OCI-LY7 (cell line): ENCODE measurements at regions of chr6 and their contacts with region 1.

Region 1: DNA sequence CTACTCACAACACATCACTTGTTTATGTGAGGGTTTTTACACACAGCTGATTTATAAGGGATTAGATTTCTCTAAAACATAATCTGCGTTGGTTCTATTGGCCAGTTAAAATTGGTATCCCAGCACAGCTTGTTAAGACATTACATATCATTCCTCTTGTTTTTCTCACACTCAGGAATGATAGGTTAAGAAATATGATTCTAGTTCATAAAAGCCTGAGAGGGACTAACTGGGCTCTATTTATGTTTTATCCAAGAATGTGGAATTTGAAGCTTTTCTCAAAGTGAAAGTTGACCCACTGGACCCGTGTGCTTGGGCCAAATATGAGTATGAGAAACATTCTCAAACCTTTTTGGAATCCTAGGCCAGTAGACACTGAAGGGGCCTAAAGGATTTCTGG is 117.3 kb downstream of the TMEM170B start:
- DNase-seq: no peak
- H3K4me3 ChIP-seq: no peak overlapping the region
- H3K27ac ChIP-seq: no peak overlapping the region
- H3K4me1 ChIP-seq: no peaks in the 10 kb centered on the region
- CTCF ChIP-seq: no peak

Region 2: DNA sequence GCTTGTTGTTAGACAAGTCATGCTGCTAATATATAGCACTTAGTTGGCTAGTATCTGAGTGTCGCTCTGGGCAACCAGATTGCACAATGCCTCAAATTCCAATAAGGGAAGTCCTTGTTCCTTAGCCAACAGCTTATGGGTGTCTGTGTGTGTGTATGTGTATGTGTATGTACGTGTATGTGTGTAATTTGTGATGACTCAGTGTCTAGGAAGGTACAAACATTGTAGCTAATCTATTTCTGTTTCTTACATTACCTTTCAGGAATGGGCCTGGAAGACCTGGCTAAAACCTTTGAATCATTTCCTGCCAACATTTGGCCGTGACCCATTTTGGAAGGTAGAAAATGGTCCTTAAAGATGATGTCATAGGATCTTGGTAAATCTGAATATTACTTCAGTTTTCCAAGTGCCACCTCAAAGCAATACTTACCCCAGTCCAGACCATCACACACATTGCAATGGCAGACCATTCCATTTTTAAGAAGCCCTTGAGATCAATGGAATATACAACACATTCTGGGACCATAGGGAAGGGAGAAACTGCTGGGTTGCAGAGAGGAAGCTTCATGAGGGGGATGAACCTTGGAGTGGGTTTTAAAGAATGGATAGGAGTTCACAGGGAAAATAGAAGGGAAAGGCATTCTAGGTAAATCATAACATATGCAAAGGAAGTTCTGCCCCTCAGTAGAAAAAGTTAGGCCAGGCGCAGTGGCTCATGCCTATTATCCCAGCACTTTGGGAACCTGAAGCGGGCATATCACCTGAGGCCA is 447.5 kb before region 1 on chr6:
- CTCF ChIA-PET with region 1: no interaction called
- POLR2A ChIA-PET with region 1: no interaction called
- intact Hi-C with region 1: no loop called
- DNase-seq: no peak
- H3K4me3 ChIP-seq: no peak overlapping the region
- H3K27ac ChIP-seq: no peak overlapping the region
- H3K4me1 ChIP-seq: no peaks in the 10 kb centered on the region
- CTCF ChIP-seq: no peak

Region 3: GRCh38 chr6:11585426-11586016 is 69.4 kb before region 1 on chr6:
- CTCF ChIA-PET with region 1: no interaction called
- POLR2A ChIA-PET with region 1: interaction called, 3 read pairs
- intact Hi-C with region 1: loop called (anchors 5 kb)
- DNase-seq: peak; percentile 43
- H3K4me3 ChIP-seq: no peak overlapping the region
- H3K27ac ChIP-seq: no peak overlapping the region
- H3K4me1 ChIP-seq: no peaks in the 10 kb centered on the region
- CTCF ChIP-seq: peak; percentile 88

Region 4: DNA sequence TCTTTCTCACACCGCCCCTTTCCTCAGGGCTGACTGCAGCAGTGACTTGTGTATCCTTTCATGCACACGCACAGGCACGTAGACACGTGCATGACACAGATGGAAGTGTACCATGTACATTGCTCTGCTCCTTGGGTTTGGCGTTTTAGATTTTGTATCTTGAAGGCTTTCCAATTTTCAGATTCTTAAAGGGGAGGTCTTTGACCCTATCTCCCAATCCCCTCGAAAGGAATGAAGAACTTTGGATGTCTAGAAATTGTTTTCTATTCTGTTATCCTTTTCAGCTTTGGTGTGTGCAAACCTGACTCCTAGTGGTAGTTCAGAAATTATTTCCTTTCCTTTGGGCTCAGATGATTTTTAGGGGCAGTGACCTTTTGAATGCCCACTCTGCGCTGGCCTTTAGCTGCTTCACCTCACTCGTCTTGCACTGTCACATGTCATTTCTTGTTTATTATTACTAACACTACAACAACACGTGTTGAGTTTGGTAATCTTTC is 420.2 kb after region 1 on chr6:
- CTCF ChIA-PET with region 1: no interaction called
- POLR2A ChIA-PET with region 1: no interaction called
- intact Hi-C with region 1: loop called (anchors 5 kb)
- DNase-seq: peak; percentile 14
- H3K4me3 ChIP-seq: no peak overlapping the region
- H3K27ac ChIP-seq: no peak overlapping the region
- H3K4me1 ChIP-seq: no peaks in the 10 kb centered on the region
- CTCF ChIP-seq: peak; percentile 73

Region 5: DNA sequence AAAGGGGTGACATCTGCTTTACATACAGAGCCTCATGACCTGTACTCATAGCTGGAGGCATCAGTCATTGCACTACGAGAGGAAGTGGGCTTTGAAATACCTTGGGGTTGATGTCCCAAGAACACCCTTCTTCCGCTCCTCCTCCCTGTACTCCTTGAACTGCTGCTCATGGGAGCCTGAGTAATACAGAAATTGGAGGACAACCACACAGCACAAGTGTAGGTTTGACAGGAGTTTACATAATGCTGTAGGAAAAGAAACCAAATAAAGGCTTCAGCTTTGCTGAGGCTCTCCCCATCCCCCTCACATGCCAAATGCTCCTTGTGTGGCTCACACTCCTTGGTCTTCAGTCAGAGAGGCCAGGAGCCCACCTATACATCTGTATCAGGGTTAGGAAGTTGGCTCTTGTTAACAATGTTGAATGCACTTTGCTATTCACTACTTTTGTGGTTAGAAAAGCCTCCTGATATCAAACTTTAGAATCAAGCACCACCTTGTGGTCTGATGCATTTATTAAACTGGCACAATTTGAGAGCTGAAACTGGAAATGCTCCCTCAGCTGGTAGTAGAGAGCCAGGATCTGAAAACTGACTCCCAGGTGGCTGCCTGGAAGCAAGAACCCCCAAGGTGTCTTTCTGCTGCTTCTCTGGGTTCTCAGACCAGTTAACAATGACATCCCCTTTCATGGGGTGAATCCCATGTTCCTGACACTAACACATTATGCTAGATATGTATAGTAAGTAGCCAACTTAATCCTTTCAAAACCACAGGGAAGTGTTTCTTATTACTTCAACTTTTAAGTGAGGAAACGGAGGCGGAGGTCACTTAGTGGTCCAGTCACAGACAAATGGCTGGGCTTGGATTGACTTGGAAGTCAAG is 579.1 kb after region 1 on chr6:
- CTCF ChIA-PET with region 1: no interaction called
- POLR2A ChIA-PET with region 1: no interaction called
- intact Hi-C with region 1: loop called (anchors 1 kb)
- DNase-seq: peak; percentile 69
- H3K4me3 ChIP-seq: no peak overlapping the region
- H3K27ac ChIP-seq: no peak overlapping the region
- H3K4me1 ChIP-seq: no peaks in the 10 kb centered on the region
- CTCF ChIP-seq: peak; percentile 89

Region 6: GRCh38 chr6:12289933-12290820 is 635.3 kb after region 1 on chr6 and contains the start of gene EDN1:
- CTCF ChIA-PET with region 1: no interaction called
- POLR2A ChIA-PET with region 1: no interaction called
- intact Hi-C with region 1: loop called (anchors 1 kb)
- DNase-seq: peak; percentile 57
- H3K4me3 ChIP-seq: peak within 1 kb of the TSS; percentile 57
- H3K27ac ChIP-seq: no peak within 1 kb of the TSS
- H3K4me1 ChIP-seq: no peaks in the 10 kb centered on the region
- CTCF ChIP-seq: peak; percentile 36; the same call in 1 of the 2 replicates
- total RNA-seq, gene EDN1: not detected in 2 replicates